Calu3 (cell line): ENCODE measurements at regions of chr19 and their contacts with region 1.

Region 1: GRCh38 chr19:54463531-54464043 is at the start of gene LENG9:
- DNase-seq: peak; percentile 99
- H3K4me3 Mint-ChIP-seq: peak within 1 kb of the TSS; percentile 72
- H3K27ac Mint-ChIP-seq: peak within 1 kb of the TSS; percentile 99
- H3K4me1 Mint-ChIP-seq: peaks cover 37% of the 10 kb centered on the region
- H3K27me3 Mint-ChIP-seq: no peaks in the 10 kb centered on the region
- CTCF ChIP-seq: no peak
- total RNA-seq, gene LENG9: 14.7 and 16.4 TPM in 2 replicates

Region 2: DNA sequence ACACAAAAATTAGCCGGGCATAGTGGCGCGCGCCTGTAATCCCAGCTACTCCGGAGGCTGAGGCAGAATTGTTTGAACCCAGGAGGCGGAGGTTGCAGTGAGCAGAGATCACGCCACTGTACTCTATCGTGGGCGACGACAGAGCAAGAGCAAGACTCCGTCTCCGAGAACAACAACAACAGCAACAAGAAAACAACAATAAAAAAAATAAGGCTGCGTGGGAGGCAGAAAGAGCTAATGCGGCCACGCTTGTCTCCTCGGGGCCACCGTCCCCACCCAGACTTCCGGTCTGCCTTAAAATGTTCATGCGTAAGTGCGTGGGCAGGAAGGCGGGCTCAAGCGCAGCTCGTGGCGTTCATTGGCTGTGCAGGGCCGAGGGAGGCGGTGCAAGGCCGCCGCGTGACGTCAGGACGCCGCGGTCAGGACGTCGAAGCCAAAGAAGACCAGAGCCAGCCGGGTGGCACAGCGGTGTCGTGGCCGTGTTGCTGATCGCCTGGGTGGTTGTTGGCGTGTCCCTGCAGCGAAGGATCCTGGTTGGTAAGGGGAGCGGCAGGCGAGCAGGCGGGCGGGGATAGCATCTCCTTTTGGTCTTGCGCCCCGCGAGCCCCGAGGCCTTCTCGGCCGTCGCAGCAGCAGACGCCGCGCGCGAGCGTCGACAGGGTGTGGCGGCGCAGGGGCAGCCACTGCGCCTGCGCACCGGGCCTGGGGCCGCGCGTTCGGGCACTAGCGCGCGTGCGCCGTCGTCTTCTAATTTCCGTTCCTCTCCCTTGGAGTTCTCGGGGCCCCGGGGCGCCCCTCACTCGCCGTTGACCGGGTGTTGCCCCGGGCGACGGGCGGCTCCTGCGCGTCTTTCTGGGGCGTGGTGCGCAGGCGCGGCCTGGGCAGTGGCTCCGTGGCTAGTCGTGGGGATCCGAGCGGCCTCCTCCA is 14.6 kb before region 1 on chr19 and contains the start of gene LENG8:
- CTCF ChIA-PET with region 1: interaction called, 14 read pairs
- intact Hi-C with region 1: loop called (anchors 2 kb)
- DNase-seq: peak; percentile 98
- H3K4me3 Mint-ChIP-seq: peak within 1 kb of the TSS; percentile 81
- H3K27ac Mint-ChIP-seq: peak within 1 kb of the TSS; percentile 92
- H3K4me1 Mint-ChIP-seq: peaks cover 24% of the 10 kb centered on the region
- H3K27me3 Mint-ChIP-seq: no peaks in the 10 kb centered on the region
- CTCF ChIP-seq: no peak
- total RNA-seq, gene LENG8: 256 and 267 TPM in 2 replicates

Region 3: GRCh38 chr19:54600212-54600611 is 136.6 kb after region 1 on chr19:
- CTCF ChIA-PET with region 1: no interaction called
- intact Hi-C with region 1: no loop called
- DNase-seq: no peak
- H3K4me3 Mint-ChIP-seq: no peak overlapping the region
- H3K27ac Mint-ChIP-seq: no peak overlapping the region
- H3K4me1 Mint-ChIP-seq: no peaks in the 10 kb centered on the region
- H3K27me3 Mint-ChIP-seq: peaks cover 76% of the 10 kb centered on the region
- CTCF ChIP-seq: no peak